ENCODE measurements at regions of chr11 and their contacts with region 1.

Region 1: GRCh38 chr11:73779084-73779902 is 8.4 kb upstream of the MRPL48 start:
- DNase-seq: peak; percentile 97 to 99 (median 98)
- ATAC-seq: peak; percentile 98
- H3K4me3 ChIP-seq: peak overlapping the region; percentile 46
- H3K27ac ChIP-seq: peak overlapping the region; percentile 97
- H3K4me1 ChIP-seq: peaks cover 12 to 28% of the 10 kb centered on the region in 2 experiments; a peak in 4 of 5 replicates
- H3K27me3 ChIP-seq: no peaks in the 10 kb centered on the region
- CTCF ChIP-seq: peak in 1 of 3 experiments; percentile 11; a peak in 1 of 6 replicates
- EP300 ChIP-seq: peak; percentile 23
- POLR2A ChIP-seq: peak; percentile 88
- RAD21 ChIP-seq: no peak

Region 2: GRCh38 chr11:72091005-72091691 is 1688.1 kb before region 1 on chr11:
- CTCF ChIA-PET with region 1: no interaction called
- POLR2A ChIA-PET with region 1: no interaction called
- in situ Hi-C with region 1: no loop called
- intact Hi-C with region 1: no loop called
- DNase-seq: peak; percentile 76 to 87 (median 82)
- ATAC-seq: peak; percentile 97
- H3K4me3 ChIP-seq: no peak overlapping the region
- H3K27ac ChIP-seq: peak overlapping the region; percentile 52; the same call in 1 of the 3 replicates
- H3K4me1 ChIP-seq: peaks cover 0 to 18% of the 10 kb centered on the region in 2 experiments; a peak in 3 of 5 replicates
- H3K27me3 ChIP-seq: no peaks in the 10 kb centered on the region
- CTCF ChIP-seq: peak; percentile 93 to 99 (median 98)
- EP300 ChIP-seq: no peak
- POLR2A ChIP-seq: no peak
- RAD21 ChIP-seq: peak; percentile 83 to 90

Region 3: DNA sequence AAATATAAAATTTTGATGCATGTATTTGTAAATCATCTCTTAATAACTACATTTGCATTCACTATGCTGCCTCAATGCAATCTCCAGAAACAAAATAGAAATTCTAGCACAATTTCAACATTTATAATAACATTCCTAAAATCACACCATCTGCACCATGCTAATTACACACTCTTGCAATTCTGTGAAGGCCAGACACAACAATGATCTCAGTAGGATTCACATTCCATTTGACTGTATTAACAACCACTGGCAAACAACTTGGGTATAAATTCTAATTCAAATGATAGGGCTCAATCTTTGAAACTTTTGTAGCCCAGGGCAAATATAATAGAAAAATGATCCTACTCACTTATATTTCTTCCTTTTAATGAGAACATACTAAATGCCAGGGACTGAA is 44.3 kb before region 1 on chr11:
- CTCF ChIA-PET with region 1: no interaction called
- POLR2A ChIA-PET with region 1: no interaction called
- in situ Hi-C with region 1: no loop called
- intact Hi-C with region 1: no loop called
- DNase-seq: no peak
- ATAC-seq: no peak
- H3K4me3 ChIP-seq: no peak overlapping the region
- H3K27ac ChIP-seq: no peak overlapping the region
- H3K4me1 ChIP-seq: no peaks in the 10 kb centered on the region; a peak in 2 of 5 replicates
- H3K27me3 ChIP-seq: no peaks in the 10 kb centered on the region
- CTCF ChIP-seq: no peak
- EP300 ChIP-seq: no peak
- POLR2A ChIP-seq: no peak
- RAD21 ChIP-seq: no peak

Region 4: DNA sequence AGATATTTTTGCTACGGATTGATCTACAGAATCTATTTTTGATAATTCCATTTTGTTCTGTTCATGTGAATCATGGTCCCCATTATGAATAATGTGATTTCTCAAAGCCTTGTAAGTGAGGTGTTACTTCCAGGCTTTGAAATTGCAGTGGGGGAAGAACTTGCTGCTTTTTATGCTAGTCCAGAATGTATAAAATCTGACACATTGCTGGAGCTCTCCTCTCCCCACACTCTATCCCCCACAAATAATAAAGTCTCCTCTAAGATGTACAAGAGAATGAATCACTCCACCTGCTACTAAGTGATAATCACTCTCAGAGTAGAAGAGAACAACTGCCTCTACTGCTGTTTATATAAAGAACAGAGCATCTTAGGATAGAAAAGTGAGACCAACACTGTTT is 12.5 kb before region 1 on chr11:
- CTCF ChIA-PET with region 1: no interaction called
- POLR2A ChIA-PET with region 1: interaction called, 86 read pairs
- in situ Hi-C with region 1: no loop called
- intact Hi-C with region 1: loop called (anchors 1 kb)
- DNase-seq: no peak
- ATAC-seq: no peak; the same call in 2 of the 3 replicates
- H3K4me3 ChIP-seq: no peak overlapping the region
- H3K27ac ChIP-seq: no peak overlapping the region
- H3K4me1 ChIP-seq: peaks cover 4 to 10% of the 10 kb centered on the region in 2 experiments; a peak in 2 of 5 replicates
- H3K27me3 ChIP-seq: no peaks in the 10 kb centered on the region
- CTCF ChIP-seq: no peak
- EP300 ChIP-seq: no peak
- POLR2A ChIP-seq: no peak
- RAD21 ChIP-seq: no peak